Left lung (tissue), 14 donors: ENCODE measurements at regions of chr12 and their contacts with region 1.

Region 1: GRCh38 chr12:64480148-64480547 is 28.2 kb downstream of the TBK1 start:
- DNase-seq: no peak
- ATAC-seq: no peak
- H3K4me3 ChIP-seq: no peak overlapping the region
- H3K27ac ChIP-seq: no peak overlapping the region
- H3K4me1 ChIP-seq: no peaks in the 10 kb centered on the region
- H3K27me3 ChIP-seq: no peaks in the 10 kb centered on the region
- CTCF ChIP-seq: no peak

Region 2: GRCh38 chr12:64431791-64432190 is 48.4 kb before region 1 on chr12:
- intact Hi-C with region 1: loop called in 1 of 2 experiments (anchors 10 kb)
- DNase-seq: no peak
- ATAC-seq: no peak
- H3K4me3 ChIP-seq: no peak overlapping the region
- H3K27ac ChIP-seq: no peak overlapping the region
- H3K4me1 ChIP-seq: no peaks in the 10 kb centered on the region
- H3K27me3 ChIP-seq: no peaks in the 10 kb centered on the region
- CTCF ChIP-seq: no peak